Right ventricle myocardium superior (tissue), 1 donor: ENCODE measurements at regions of chr18 and their contacts with region 1.

Region 1: DNA sequence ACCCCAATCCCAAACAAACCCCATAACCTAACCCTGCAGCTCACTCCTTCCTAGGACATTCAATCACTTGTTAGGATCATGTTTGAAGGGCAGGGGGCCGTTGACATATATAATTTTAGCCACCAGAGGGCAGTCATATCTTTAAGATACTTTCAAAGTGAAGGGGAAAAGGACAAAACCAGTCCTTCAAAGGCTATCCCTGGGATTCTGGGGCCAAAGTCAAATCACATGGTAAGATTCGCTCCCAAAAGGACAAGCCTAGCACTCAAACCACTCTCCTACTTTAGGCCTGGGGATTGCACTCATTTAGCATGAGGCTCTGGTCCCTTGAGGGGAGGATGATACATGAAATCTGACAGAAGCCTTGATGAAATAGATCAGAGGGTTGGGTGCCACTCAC is 44.6 kb downstream of the HAUS1 start:
- DNase-seq: no peak
- ATAC-seq: peak; percentile 57

Region 2: DNA sequence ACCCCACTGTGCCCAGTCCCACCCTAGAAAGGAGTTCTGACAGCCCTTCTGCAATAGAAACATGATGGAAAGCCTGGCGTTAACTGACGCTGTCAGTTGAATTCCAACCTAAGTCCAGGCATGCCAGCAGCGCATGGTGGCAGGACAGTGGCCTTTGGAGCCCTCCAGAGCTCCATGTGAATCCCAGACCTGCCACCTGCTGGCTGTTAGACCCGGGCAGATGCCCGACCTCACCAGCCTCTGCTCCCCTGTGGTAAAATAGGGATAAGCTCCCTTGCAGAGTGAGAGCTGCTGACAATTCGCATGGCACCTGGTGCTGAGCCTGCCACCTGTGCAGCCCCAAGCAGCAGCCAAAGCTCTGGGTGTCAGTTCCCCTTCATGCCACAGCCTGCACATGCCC is 369.6 kb after region 1 on chr18:
- intact Hi-C with region 1: loop called (anchors 10 kb)
- DNase-seq: peak; percentile 71
- ATAC-seq: peak; percentile 95

Region 3: GRCh38 chr18:46657115-46657955 is 508.5 kb after region 1 on chr18 and contains the start of gene LOXHD1:
- intact Hi-C with region 1: loop called (anchors 5 kb)
- DNase-seq: no peak
- ATAC-seq: no peak
- total RNA-seq, gene LOXHD1: 0.62 TPM